Mucosa of descending colon (tissue), 3 donors: ENCODE measurements at regions of chr7 and their contacts with region 1.

Region 1: DNA sequence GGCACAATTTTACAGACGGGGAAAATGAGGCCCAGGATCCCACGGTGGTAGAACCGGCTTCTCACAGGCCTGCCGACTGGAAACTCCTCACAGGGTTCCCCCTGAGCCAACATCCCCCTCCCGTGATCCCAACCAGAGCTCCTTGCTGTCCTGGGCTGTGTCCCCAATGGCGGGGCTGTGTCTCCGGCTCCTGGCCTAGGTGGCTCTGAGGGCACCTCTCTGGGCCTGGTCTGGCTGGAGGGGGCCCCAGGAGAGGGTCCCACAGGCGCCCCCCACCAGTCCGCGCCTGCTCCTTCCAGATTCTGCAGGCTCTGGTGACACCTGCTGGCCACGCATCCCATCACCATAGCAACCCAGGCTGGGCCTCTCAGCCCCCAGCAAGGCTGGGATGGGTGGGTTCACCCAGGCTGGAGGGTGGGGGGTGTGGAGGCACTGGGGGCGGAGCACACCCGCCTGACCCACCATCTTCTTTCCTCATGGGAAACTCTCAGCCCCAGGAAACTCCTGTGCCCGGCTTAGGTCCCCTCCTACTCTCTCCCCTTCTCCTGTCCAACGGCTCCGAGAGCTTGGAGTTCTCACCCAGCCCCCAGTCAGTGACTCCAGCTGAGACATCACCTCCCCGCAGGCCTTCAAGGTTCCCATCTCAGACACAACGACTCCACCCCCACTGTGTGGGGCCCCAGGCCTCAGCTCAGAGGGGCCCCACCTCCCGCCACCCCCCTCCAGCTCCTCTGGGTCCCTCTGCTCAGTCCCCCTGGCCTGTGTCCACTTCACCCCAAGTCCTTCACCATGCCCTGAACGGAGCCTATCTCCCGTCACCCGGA is 27.1 kb upstream of the TNRC18 start:
- DNase-seq: peak in 2 of 3 donors; percentile 72 to 75
- ATAC-seq: peak; percentile 68
- H3K4me3 ChIP-seq: no peak overlapping the region
- H3K4me1 ChIP-seq: peaks cover 11% of the 10 kb centered on the region
- CTCF ChIP-seq: peak; percentile 53

Region 2: DNA sequence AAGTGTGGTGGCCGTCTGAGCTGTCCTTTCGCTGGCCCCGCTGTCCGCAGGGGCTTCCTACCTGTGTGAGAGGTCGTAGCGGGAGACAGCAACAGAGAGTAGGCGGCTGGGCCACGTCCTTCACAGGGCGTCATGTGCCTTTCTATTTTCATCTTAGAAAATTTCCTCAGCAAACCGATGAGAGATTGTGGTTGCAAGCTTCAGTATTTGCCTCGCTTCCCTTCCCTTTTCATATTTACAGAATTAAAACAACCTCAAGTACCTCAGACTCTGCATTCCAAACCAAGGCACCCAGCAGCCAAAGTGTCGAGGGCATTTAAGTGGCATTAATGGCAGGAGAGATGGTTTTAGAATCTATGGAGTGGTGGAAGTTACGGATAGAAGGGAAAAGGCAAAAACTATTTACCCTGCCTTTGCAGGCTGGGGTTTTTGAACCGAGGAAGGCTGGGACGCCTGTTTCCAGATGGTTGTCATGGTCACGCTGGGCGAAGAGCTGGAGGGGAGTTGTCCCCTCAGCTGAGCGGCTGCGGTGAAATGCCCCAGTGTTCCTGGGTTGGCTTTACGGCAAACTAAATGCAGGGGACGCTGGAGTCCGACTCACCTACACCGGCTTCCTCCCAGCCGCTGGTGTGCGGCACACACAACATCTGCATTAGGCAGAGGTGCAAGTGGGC is 218.8 kb before region 1 on chr7:
- intact Hi-C with region 1: loop called in 1 of 2 experiments (anchors 10 kb)
- DNase-seq: peak in 2 of 3 donors; percentile 34 to 55
- ATAC-seq: peak; percentile 42
- H3K4me3 ChIP-seq: no peak overlapping the region
- H3K4me1 ChIP-seq: peaks cover 5% of the 10 kb centered on the region
- CTCF ChIP-seq: no peak

Region 3: DNA sequence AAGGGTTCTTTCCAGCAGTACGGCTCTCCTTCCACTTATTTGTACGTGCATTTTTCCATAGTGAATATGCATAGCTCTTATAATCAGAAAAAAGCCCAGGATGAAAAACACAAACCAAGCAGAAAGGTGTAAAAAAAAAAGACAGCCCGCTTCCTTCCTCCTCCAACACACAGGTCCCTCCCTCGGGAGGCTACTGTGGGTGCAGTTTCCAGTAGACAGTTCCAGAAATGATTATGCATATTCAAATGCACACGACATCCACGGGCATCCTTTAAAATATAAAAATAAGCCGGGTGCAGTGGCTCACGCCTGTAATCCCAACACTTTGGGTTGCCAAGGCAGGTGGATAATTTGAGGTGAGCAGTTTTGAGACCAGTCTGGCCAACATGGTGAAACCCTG is 87.0 kb before region 1 on chr7:
- intact Hi-C with region 1: loop called in 1 of 2 experiments (anchors 10 kb)
- DNase-seq: no peak
- ATAC-seq: no peak
- H3K4me3 ChIP-seq: no peak overlapping the region
- H3K4me1 ChIP-seq: peaks cover 5% of the 10 kb centered on the region
- CTCF ChIP-seq: no peak

Region 4: DNA sequence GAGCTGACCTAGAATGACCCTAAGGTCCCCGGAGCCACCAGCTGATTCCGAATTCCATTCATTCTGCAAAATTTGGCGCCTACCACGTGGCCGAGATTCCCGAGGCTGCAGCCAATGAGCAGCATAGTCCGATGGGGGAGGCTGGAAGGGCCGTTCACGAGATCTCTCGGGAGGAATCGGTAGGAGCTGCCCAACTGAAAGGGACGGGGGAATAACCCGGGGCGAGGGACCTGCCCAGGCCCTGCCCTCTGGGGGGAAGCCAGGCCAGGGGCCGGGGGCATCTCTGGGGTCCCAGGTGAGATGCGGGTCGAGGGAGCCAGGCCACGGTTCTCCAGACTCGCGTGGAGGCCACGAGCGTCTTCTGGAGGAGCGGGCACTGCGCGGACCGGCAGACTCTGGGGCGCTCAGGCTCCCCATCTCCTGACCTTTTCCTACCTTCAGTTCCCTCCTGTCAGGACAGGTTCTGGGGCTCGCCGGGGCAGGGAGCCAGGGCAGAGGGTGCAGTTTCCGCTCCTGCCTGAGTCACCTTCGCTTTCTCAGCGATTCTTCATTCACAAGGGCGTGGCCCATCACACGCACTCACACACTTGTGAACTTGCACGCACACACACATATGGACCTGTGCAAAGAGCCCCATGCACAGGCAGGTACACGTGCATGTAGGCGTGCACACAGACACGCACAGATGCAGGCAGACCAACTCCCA is 157.3 kb after region 1 on chr7:
- intact Hi-C with region 1: no loop called
- DNase-seq: no peak
- ATAC-seq: no peak
- H3K4me3 ChIP-seq: no peak overlapping the region
- H3K4me1 ChIP-seq: no peaks in the 10 kb centered on the region
- CTCF ChIP-seq: no peak